ENCODE measurements at regions of chr19 and their contacts with region 1.

Region 1: GRCh38 chr19:49363268-49364082 is at the start of gene DKKL1:
- DNase-seq: peak; percentile 97 to 100
- H3K4me3 ChIP-seq: peak within 1 kb of the TSS; percentile 85
- H3K27ac ChIP-seq: no peak within 1 kb of the TSS
- H3K4me1 ChIP-seq: 0 out of 2 replicates have a peak, but pooled peaks cover 10% of the 10 kb centered on the region
- H3K27me3 ChIP-seq: no peaks in the 10 kb centered on the region
- CTCF ChIP-seq: peak; percentile 43; the same call in 1 of the 2 replicates
- total RNA-seq, gene DKKL1: 0.85 TPM in 1 of 2 replicates, not detected in the other

Region 2: GRCh38 chr19:48660854-48661731 is 702.4 kb before region 1 on chr19:
- CTCF ChIA-PET with region 1: no interaction called
- POLR2A ChIA-PET with region 1: interaction called, 15 read pairs
- intact Hi-C with region 1: no loop called
- DNase-seq: peak; percentile 73 to 81
- H3K4me3 ChIP-seq: no peak overlapping the region
- H3K27ac ChIP-seq: no peak overlapping the region
- H3K4me1 ChIP-seq: peaks cover 5% of the 10 kb centered on the region; the same call in 1 of the 2 replicates
- H3K27me3 ChIP-seq: no peaks in the 10 kb centered on the region
- CTCF ChIP-seq: no peak

Region 3: GRCh38 chr19:49315111-49315510 is 48.4 kb before region 1 on chr19:
- CTCF ChIA-PET with region 1: no interaction called
- POLR2A ChIA-PET with region 1: no interaction called
- intact Hi-C with region 1: no loop called
- DNase-seq: no peak
- H3K4me3 ChIP-seq: no peak overlapping the region
- H3K27ac ChIP-seq: no peak overlapping the region
- H3K4me1 ChIP-seq: no peaks in the 10 kb centered on the region
- H3K27me3 ChIP-seq: peaks cover 14% of the 10 kb centered on the region; the same call in 1 of the 2 replicates
- CTCF ChIP-seq: no peak

Region 4: GRCh38 chr19:49339301-49340068 is 24.0 kb before region 1 on chr19:
- CTCF ChIA-PET with region 1: interaction called, 4 read pairs
- POLR2A ChIA-PET with region 1: interaction called, 10 read pairs
- intact Hi-C with region 1: loop called (anchors 2 kb)
- DNase-seq: peak in 1 of 2 experiments; percentile 87
- H3K4me3 ChIP-seq: no peak overlapping the region
- H3K27ac ChIP-seq: no peak overlapping the region
- H3K4me1 ChIP-seq: no peaks in the 10 kb centered on the region
- H3K27me3 ChIP-seq: no peaks in the 10 kb centered on the region
- CTCF ChIP-seq: no peak

Region 5: GRCh38 chr19:49468746-49469447 is 105.4 kb after region 1 on chr19:
- CTCF ChIA-PET with region 1: no interaction called
- POLR2A ChIA-PET with region 1: no interaction called
- intact Hi-C with region 1: no loop called
- DNase-seq: peak; percentile 44 to 62
- H3K4me3 ChIP-seq: no peak overlapping the region
- H3K27ac ChIP-seq: no peak overlapping the region
- H3K4me1 ChIP-seq: no peaks in the 10 kb centered on the region
- H3K27me3 ChIP-seq: no peaks in the 10 kb centered on the region
- CTCF ChIP-seq: no peak

Region 6: GRCh38 chr19:49497047-49497788 is 133.7 kb after region 1 on chr19:
- CTCF ChIA-PET with region 1: no interaction called
- POLR2A ChIA-PET with region 1: no interaction called
- intact Hi-C with region 1: loop called (anchors 1 kb)
- DNase-seq: peak; percentile 55 to 61
- H3K4me3 ChIP-seq: peak overlapping the region; percentile 89
- H3K27ac ChIP-seq: peak overlapping the region; percentile 91
- H3K4me1 ChIP-seq: peaks cover 22% of the 10 kb centered on the region
- H3K27me3 ChIP-seq: no peaks in the 10 kb centered on the region
- CTCF ChIP-seq: no peak

Region 7: DNA sequence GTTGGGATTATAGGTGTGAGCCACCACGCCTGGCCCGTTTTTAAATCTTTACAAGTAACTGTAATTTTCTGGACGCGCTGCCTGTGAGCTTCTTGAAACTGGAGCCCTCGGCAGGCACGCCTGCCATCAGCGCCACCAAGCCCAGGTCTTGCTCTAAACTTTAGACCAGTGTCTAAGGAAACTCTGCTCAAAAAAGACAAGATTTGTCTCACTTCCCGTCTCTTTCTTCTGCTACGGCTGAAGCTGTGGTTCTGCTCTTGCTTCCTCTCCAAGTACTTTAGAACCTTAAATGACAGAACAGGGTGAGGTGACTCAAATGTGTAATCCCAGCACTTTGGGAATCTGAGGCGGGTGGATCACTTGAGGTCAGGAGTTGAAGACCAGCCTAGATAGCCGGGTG is 189.3 kb after region 1 on chr19:
- CTCF ChIA-PET with region 1: no interaction called
- POLR2A ChIA-PET with region 1: no interaction called
- intact Hi-C with region 1: no loop called
- DNase-seq: no peak
- H3K4me3 ChIP-seq: no peak overlapping the region
- H3K27ac ChIP-seq: no peak overlapping the region
- H3K4me1 ChIP-seq: no peaks in the 10 kb centered on the region
- H3K27me3 ChIP-seq: no peaks in the 10 kb centered on the region
- CTCF ChIP-seq: no peak

Region 8: DNA sequence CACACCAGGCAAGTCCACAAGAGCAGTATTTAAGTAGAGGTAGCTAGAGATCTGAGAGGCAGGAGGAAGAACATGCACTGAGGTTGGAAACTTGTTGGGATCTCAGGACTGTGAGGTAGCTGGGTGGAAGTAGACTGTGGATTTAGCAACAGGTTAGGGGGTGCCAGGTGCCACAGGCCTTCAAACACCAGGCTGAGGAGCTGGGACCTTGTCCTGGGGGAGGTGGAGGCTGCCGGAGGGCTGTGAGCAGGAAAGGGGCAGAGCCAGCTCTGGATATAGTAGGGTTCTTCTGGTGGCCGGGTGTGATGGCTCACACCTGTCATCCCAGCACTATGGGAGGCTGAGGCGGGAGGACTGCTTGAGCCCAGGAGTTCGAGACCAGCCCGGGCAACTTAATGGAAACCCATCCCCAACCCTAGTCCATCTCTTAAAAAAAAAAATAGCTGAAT is 446.5 kb after region 1 on chr19:
- CTCF ChIA-PET with region 1: interaction called, 14 read pairs
- POLR2A ChIA-PET with region 1: interaction called, 13 read pairs
- intact Hi-C with region 1: no loop called
- DNase-seq: no peak
- H3K4me3 ChIP-seq: peak overlapping the region; percentile 60; the same call in 1 of the 2 replicates
- H3K27ac ChIP-seq: no peak overlapping the region
- H3K4me1 ChIP-seq: peaks cover 15% of the 10 kb centered on the region
- H3K27me3 ChIP-seq: no peaks in the 10 kb centered on the region
- CTCF ChIP-seq: no peak

Measured in PC-9 (cell line).